ENCODE measurements at regions of chr3 and their contacts with region 1.

Region 1: GRCh38 chr3:17841190-17841828 is 98.9 kb upstream of the TBC1D5 start:
- DNase-seq: peak in 1 of 2 experiments; percentile 57
- H3K4me3 ChIP-seq: no peak overlapping the region
- H3K27ac ChIP-seq: no peak overlapping the region
- H3K4me1 ChIP-seq: no peaks in the 10 kb centered on the region
- H3K27me3 ChIP-seq: no peaks in the 10 kb centered on the region
- CTCF ChIP-seq: peak; percentile 95

Region 2: DNA sequence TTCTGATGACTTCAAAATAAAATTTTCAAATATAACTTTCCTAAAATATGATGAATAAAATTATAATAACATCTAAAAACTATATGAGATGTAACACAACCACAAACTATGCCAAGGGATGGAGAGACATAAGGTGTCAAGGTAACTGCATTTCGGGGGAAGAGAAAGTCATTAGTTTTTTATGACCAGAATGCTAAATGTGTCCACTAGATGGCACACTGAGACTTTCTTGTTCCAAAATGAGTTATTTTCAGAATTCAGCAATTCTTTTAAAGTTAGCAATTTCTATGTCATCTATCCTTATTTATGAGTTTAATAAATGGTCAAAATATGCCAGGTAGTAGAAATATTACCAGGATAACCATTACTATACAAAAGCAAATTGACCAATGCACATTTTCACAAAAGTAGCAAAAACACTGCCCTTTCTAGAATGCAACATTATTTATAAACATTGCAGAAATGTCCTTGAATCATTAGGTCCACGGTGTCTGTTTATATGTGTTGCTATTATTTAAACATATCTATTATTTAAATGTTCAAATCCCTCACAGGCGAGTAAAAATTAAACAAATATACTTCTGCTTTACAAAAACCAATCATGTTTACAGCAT is 582.4 kb before region 1 on chr3:
- CTCF ChIA-PET with region 1: no interaction called
- POLR2A ChIA-PET with region 1: no interaction called
- intact Hi-C with region 1: loop called (anchors 5 kb)
- DNase-seq: no peak
- H3K4me3 ChIP-seq: no peak overlapping the region
- H3K27ac ChIP-seq: no peak overlapping the region
- H3K4me1 ChIP-seq: no peaks in the 10 kb centered on the region
- H3K27me3 ChIP-seq: no peaks in the 10 kb centered on the region
- CTCF ChIP-seq: peak; percentile 88

Region 3: DNA sequence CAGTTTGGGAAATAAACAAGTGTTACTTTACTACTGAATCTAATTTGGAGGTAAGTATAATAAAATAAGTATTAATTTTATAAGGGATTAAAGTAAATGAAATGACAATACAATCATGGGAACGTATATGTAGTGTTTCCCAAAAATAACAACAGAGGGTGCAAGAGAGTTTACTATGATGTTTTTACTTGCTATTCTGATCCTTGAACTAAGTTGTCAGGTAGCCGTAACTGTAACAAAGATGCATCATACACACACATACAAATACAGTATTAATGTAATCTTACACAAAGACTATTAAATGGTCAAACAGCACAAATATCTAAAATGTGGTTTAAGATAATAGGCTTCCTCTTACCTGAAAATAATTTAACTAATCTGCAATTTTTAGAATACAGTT is 410.3 kb before region 1 on chr3:
- CTCF ChIA-PET with region 1: interaction called, 3 read pairs
- POLR2A ChIA-PET with region 1: no interaction called
- intact Hi-C with region 1: loop called (anchors 1 kb)
- DNase-seq: no peak
- H3K4me3 ChIP-seq: no peak overlapping the region
- H3K27ac ChIP-seq: no peak overlapping the region
- H3K4me1 ChIP-seq: peaks cover 13% of the 10 kb centered on the region
- H3K27me3 ChIP-seq: no peaks in the 10 kb centered on the region
- CTCF ChIP-seq: peak; percentile 70

Region 4: DNA sequence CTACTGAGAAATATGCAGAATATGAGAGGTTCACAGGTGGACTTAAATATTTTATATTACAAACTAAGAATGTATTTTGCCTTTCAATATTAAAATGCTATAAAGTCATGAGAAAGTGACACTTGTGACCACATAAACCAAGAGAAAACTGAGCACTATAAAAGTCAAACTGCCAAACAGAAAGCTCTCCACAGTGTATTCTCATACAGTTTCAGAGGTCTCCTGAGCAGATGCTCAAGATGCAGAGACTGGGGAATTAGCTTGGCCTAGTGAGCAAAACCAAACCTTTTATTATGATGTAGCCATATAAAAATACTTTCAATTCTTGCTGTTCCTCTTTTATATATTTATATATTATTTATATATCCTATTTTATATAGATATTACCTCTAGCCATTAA is 326.7 kb before region 1 on chr3:
- CTCF ChIA-PET with region 1: no interaction called
- POLR2A ChIA-PET with region 1: no interaction called
- intact Hi-C with region 1: no loop called
- DNase-seq: no peak
- H3K4me3 ChIP-seq: no peak overlapping the region
- H3K27ac ChIP-seq: no peak overlapping the region
- H3K4me1 ChIP-seq: peaks cover 12% of the 10 kb centered on the region
- H3K27me3 ChIP-seq: no peaks in the 10 kb centered on the region
- CTCF ChIP-seq: no peak

Region 5: GRCh38 chr3:17605032-17605431 is 236.3 kb before region 1 on chr3:
- CTCF ChIA-PET with region 1: no interaction called
- POLR2A ChIA-PET with region 1: interaction called, 16 read pairs
- intact Hi-C with region 1: no loop called
- DNase-seq: peak; percentile 6 to 77
- H3K4me3 ChIP-seq: no peak overlapping the region
- H3K27ac ChIP-seq: no peak overlapping the region
- H3K4me1 ChIP-seq: peaks cover 14% of the 10 kb centered on the region
- H3K27me3 ChIP-seq: no peaks in the 10 kb centered on the region
- CTCF ChIP-seq: no peak

Region 6: DNA sequence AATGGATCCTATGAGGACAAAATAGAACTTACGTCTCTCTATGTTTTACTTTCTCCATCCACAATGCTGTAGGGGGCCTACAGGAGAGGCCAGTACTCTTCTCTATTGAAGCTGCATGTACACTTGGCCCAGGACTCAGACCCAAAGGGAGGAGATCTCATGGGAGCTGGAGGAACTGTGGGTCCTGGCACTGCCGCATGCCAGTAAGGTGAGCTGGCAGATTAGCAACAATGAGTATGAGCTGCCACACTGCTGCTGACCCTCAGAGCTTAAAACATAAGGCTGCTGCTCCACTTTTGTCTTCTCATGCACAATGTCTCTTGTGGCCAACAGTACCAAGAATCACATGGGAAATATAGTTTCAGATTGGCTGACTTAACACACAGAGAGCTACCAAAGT is 41.1 kb before region 1 on chr3:
- CTCF ChIA-PET with region 1: interaction called, 10 read pairs
- POLR2A ChIA-PET with region 1: no interaction called
- intact Hi-C with region 1: no loop called
- DNase-seq: peak in 1 of 2 experiments; percentile 52
- H3K4me3 ChIP-seq: no peak overlapping the region
- H3K27ac ChIP-seq: no peak overlapping the region
- H3K4me1 ChIP-seq: no peaks in the 10 kb centered on the region
- H3K27me3 ChIP-seq: no peaks in the 10 kb centered on the region
- CTCF ChIP-seq: no peak

Measured in PC-9 (cell line).